Caco-2 (cell line): ENCODE measurements at regions of chr3 and their contacts with region 1.

Region 1: DNA sequence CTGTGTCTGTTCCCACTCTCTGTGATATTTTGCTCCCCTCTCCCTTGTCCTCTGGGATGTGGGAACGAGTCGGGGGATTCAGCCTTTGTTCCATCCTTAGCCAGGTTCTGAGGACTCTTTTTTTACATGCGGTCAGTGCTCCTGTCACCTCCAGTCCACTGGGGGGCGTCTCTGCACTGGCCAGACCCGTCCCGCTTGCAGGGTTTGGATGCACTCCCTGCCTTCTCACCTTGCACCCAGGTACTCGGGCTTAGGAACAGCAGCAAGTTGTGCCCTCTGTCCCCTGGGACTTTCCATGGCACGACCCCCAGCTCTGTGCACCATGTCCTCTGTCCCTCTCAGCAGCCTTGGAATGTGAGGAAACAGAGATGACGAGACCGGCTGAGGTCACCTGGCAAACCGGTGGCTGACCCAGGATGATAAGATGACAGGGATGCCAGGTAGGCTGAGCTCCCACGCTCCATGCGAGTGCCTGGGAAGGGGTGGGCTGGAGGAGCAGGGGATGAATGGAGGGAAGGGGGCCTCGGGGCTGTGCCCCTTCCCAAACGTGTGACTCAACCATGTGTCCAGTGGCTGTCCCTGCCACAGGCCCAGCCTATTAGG is 27.3 kb upstream of the FGD5 start:
- DNase-seq: peak; percentile 69 to 80
- H3K4me3 ChIP-seq: no peak overlapping the region
- H3K4me3 Mint-ChIP-seq: no peak overlapping the region
- H3K27ac Mint-ChIP-seq: no peak overlapping the region
- H3K4me1 ChIP-seq: peaks cover 17% of the 10 kb centered on the region; the same call in 1 of the 2 replicates
- H3K4me1 Mint-ChIP-seq: peaks cover 8% of the 10 kb centered on the region
- H3K27me3 ChIP-seq: no peaks in the 10 kb centered on the region
- H3K27me3 Mint-ChIP-seq: peaks cover 2% of the 10 kb centered on the region
- CTCF ChIP-seq: peak; percentile 52 to 88

Region 2: GRCh38 chr3:14915636-14916222 is 124.3 kb after region 1 on chr3:
- CTCF ChIA-PET with region 1: interaction called, 10 read pairs
- POLR2A ChIA-PET with region 1: no interaction called
- intact Hi-C with region 1: loop called (anchors 1 kb)
- DNase-seq: no peak
- H3K4me3 ChIP-seq: no peak overlapping the region
- H3K4me3 Mint-ChIP-seq: no peak overlapping the region
- H3K27ac Mint-ChIP-seq: no peak overlapping the region
- H3K4me1 ChIP-seq: no peaks in the 10 kb centered on the region
- H3K4me1 Mint-ChIP-seq: no peaks in the 10 kb centered on the region
- H3K27me3 ChIP-seq: no peaks in the 10 kb centered on the region
- H3K27me3 Mint-ChIP-seq: peaks cover 12% of the 10 kb centered on the region
- CTCF ChIP-seq: no peak